HCT116 (cell line): ENCODE measurements at regions of chr7 and their contacts with region 1.

Region 1: DNA sequence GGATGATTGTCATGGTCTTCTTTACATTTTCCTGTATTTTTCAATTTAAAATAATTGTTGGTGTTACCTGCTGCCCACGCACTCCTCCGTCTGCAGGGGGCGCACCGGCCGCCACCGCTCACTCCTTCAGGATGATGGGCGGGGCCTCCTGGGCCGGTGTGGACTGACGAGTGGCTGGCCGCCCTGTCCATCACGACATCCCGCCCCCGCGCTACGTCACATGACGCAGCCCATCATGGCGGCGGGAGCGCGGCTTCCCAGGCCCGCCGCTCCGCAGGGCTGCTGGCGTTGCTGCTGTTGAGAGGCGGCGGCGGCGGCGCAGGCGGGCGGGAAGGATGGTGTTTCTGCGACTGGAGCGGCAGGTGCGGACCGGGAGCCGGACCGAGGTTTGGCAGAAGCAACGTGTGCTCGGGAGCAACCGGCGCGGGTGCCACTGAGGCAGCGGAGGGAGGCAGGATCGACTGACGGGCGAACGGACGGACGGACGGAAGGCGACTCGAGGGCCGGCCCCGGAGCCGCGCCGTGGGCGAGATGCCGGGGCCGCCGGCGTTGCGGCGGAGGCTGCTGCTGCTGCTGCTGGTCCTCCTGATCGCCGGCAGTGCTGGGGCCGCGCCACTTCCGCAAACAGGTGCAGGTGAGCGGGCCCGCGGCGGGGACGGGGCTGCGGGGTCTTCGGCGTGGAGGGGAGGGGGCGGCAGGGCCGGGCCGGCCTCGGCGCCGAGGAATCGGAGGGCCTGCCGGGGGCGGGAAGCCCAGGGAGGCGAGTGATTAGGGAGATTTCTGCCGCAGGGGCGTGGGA is at the start of gene LMTK2:
- DNase-seq: peak; percentile 73
- ATAC-seq: peak; percentile 98
- H3K4me3 ChIP-seq: peak within 1 kb of the TSS; percentile 75 to 96
- H3K27ac ChIP-seq: peak within 1 kb of the TSS; percentile 49; the same call in 1 of the 2 replicates
- H3K4me1 ChIP-seq: peaks cover 4 to 16% of the 10 kb centered on the region in 2 experiments; a peak in 3 of 4 replicates
- H3K27me3 ChIP-seq: no peaks in the 10 kb centered on the region
- CTCF ChIP-seq: peak; percentile 77 to 94 (median 85)
- POLR2A ChIP-seq: peak; percentile 84
- RAD21 ChIP-seq: peak; percentile 65
- total RNA-seq, gene LMTK2: 17.8 TPM

Region 2: DNA sequence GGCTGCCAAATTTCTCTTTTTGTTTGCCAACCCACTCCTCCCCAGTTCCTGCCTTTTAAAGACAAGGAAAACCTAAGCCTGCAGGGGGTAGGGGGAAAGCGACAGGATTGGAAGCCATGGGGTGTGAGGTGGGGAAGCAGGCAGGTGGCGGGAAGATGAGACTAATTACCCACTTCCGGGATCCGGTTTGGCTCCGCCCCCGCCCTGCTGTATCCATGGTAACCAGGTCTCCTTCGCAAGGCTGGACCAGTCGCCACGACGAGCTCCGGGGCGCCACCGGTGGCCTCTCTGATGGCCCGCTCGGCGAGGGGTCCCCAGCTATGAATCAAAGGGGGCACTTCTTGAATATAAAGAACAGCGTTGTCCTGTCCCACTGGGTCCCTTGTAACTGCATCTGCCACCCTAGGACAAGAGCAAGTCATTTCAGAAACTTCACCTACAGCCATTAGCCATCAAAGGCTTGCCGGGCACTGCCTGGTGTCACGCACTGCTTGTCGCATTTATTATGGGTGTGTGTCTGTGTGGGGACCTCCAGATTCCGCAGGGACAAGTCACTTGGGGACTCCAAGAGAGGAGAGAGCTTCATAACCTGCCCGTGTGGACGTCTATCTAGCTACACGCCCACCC is 55.6 kb before region 1 on chr7:
- CTCF ChIA-PET with region 1: no interaction called
- POLR2A ChIA-PET with region 1: no interaction called
- RAD21 ChIA-PET with region 1: no interaction called
- intact Hi-C with region 1: loop called (anchors 2 kb)
- DNase-seq: peak; percentile 58
- ATAC-seq: peak; percentile 94
- H3K4me3 ChIP-seq: peak overlapping the region in 1 of 2 experiments; percentile 27; a peak in 2 of 4 replicates
- H3K27ac ChIP-seq: no peak overlapping the region
- H3K4me1 ChIP-seq: peaks cover 3 to 13% of the 10 kb centered on the region in 2 experiments; a peak in 3 of 4 replicates
- H3K27me3 ChIP-seq: no peaks in the 10 kb centered on the region
- CTCF ChIP-seq: 0 out of 6 replicates have a peak, but pooled peaks of 2 of the 3 experiments have one; percentile 11 to 19
- POLR2A ChIP-seq: no peak
- RAD21 ChIP-seq: no peak

Region 3: DNA sequence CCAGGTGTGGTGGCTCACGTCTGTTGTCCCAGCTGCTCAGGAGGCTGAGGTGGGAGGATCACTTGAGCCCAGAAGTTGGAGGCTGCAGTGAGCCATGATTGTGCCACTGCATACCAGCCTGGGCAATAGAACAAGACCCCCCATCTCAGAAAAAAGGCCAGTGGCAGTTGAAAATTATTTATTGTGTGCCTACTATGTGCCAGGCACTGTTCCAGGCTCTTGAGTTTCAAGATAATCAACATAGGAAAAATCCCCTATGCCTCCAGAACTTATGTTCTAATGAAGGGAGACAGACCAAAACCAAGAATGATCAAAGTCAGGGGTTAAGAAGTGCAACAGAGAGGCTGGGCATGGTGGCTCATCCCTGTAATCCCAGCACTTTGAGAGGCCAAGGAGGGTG is 42.6 kb before region 1 on chr7:
- CTCF ChIA-PET with region 1: no interaction called
- POLR2A ChIA-PET with region 1: no interaction called
- RAD21 ChIA-PET with region 1: no interaction called
- intact Hi-C with region 1: no loop called
- DNase-seq: no peak
- ATAC-seq: no peak
- H3K4me3 ChIP-seq: no peak overlapping the region
- H3K27ac ChIP-seq: no peak overlapping the region
- H3K4me1 ChIP-seq: no peaks in the 10 kb centered on the region
- H3K27me3 ChIP-seq: no peaks in the 10 kb centered on the region
- CTCF ChIP-seq: no peak
- POLR2A ChIP-seq: no peak
- RAD21 ChIP-seq: no peak

Region 4: GRCh38 chr7:98168181-98168905 is 61.5 kb after region 1 on chr7:
- CTCF ChIA-PET with region 1: interaction called, 11 read pairs
- POLR2A ChIA-PET with region 1: no interaction called
- RAD21 ChIA-PET with region 1: no interaction called
- intact Hi-C with region 1: loop called (anchors 2 kb)
- DNase-seq: peak; percentile 67
- ATAC-seq: peak; percentile 72
- H3K4me3 ChIP-seq: no peak overlapping the region
- H3K27ac ChIP-seq: no peak overlapping the region
- H3K4me1 ChIP-seq: peaks cover 0 to 2% of the 10 kb centered on the region in 2 experiments; a peak in 1 of 4 replicates
- H3K27me3 ChIP-seq: no peaks in the 10 kb centered on the region
- CTCF ChIP-seq: peak; percentile 80 to 85 (median 84)
- POLR2A ChIP-seq: no peak
- RAD21 ChIP-seq: peak; percentile 89

Region 5: DNA sequence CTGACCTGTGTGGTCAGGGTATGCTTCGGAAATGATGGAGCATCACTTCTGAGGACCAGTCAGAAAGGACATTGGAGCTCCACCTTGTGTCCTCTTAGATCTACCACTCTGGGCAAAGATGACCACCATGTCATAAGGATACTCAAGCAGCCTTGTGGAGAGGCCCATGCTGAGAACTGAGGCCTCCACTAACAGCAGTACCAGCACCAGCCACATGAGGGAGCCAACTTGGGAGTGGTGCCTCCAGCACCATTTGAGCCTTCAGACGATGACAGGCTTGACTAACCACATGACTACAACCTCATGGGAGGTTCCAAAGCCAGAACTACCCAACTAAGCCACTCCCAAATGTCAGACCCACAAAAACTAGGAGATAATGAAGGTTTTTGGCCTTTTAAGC is 626.2 kb after region 1 on chr7:
- CTCF ChIA-PET with region 1: no interaction called
- POLR2A ChIA-PET with region 1: no interaction called
- RAD21 ChIA-PET with region 1: no interaction called
- intact Hi-C with region 1: no loop called
- DNase-seq: peak; percentile 85
- ATAC-seq: peak; percentile 97
- H3K4me3 ChIP-seq: no peak overlapping the region
- H3K27ac ChIP-seq: no peak overlapping the region
- H3K4me1 ChIP-seq: no peaks in the 10 kb centered on the region
- H3K27me3 ChIP-seq: no peaks in the 10 kb centered on the region
- CTCF ChIP-seq: peak; percentile 57 to 90 (median 90)
- POLR2A ChIP-seq: no peak
- RAD21 ChIP-seq: peak; percentile 59